PC-9 (cell line): ENCODE measurements at regions of chr17 and their contacts with region 1.

Region 1: GRCh38 chr17:81860756-81861518 is 602 bp upstream of the P4HB start:
- DNase-seq: peak; percentile 99
- H3K4me3 ChIP-seq: peak overlapping the region; percentile 86
- H3K27ac ChIP-seq: peak overlapping the region; percentile 80
- H3K4me1 ChIP-seq: no peaks in the 10 kb centered on the region
- H3K27me3 ChIP-seq: no peaks in the 10 kb centered on the region
- CTCF ChIP-seq: no peak

Region 2: GRCh38 chr17:81222906-81223761 is 637.8 kb before region 1 on chr17 and contains the start of gene CEP131:
- CTCF ChIA-PET with region 1: interaction called, 15 read pairs
- POLR2A ChIA-PET with region 1: no interaction called
- intact Hi-C with region 1: no loop called
- DNase-seq: peak; percentile 87 to 100
- H3K4me3 ChIP-seq: peak within 1 kb of the TSS; percentile 81
- H3K27ac ChIP-seq: no peak within 1 kb of the TSS
- H3K4me1 ChIP-seq: 0 out of 2 replicates have a peak, but pooled peaks cover 9% of the 10 kb centered on the region
- H3K27me3 ChIP-seq: no peaks in the 10 kb centered on the region
- CTCF ChIP-seq: no peak
- total RNA-seq, gene CEP131: 24.4 and 33.4 TPM in 2 replicates

Region 3: GRCh38 chr17:81722184-81723120 is 138.5 kb before region 1 on chr17:
- CTCF ChIA-PET with region 1: interaction called, 3 read pairs
- POLR2A ChIA-PET with region 1: interaction called, 11 read pairs
- intact Hi-C with region 1: no loop called
- DNase-seq: peak; percentile 79 to 99
- H3K4me3 ChIP-seq: no peak overlapping the region
- H3K27ac ChIP-seq: peak overlapping the region; percentile 68
- H3K4me1 ChIP-seq: peaks cover 27% of the 10 kb centered on the region
- H3K27me3 ChIP-seq: no peaks in the 10 kb centered on the region
- CTCF ChIP-seq: no peak

Region 4: DNA sequence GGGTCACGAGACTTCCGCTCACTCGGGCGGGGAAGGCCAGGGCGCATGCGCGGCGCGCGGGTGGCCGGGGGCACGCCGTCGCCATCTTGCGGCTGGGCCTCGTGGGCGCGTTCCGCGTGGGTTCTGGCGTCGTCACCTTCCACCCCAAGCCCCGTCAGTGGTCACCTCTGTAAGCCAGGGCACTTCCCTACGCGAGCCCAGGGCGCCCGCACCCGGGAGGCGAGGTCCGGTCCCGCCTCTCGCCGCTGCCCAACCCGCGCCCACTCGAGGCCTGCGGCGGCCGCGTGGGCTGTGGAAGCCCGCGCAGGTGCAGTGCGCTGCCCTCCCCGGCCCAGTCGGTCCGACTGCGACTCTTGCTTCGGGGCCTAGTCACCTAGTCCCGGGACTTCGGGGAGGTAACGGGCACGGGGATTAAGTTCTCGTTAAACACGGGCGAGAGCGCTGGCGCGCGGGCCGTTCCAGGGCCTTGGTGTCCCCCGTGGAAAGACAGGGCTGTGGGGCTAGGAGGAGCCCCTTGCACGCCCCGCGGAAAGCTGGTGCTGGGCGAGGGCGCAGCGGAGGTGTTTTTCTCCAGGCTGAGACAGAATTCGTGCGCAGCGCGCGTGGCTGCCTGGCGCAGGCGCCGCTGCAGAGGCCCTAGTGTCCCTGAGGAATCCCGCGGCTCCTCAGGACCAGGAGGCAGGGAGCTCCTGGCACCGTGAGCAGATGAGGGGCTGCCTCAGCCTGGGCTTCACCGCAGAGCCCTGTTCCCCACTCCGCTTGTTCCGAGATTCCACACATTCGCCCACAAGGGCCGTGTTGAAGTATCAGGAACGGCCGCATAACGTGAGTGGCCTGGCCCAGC is 10.7 kb after region 1 on chr17:
- CTCF ChIA-PET with region 1: no interaction called
- POLR2A ChIA-PET with region 1: interaction called, 12 read pairs
- intact Hi-C with region 1: no loop called
- DNase-seq: peak; percentile 47 to 91
- H3K4me3 ChIP-seq: peak overlapping the region; percentile 88
- H3K27ac ChIP-seq: peak overlapping the region; percentile 87
- H3K4me1 ChIP-seq: 0 out of 2 replicates have a peak, but pooled peaks cover 14% of the 10 kb centered on the region
- H3K27me3 ChIP-seq: no peaks in the 10 kb centered on the region
- CTCF ChIP-seq: no peak; the same call in 1 of the 2 replicates

Region 5: DNA sequence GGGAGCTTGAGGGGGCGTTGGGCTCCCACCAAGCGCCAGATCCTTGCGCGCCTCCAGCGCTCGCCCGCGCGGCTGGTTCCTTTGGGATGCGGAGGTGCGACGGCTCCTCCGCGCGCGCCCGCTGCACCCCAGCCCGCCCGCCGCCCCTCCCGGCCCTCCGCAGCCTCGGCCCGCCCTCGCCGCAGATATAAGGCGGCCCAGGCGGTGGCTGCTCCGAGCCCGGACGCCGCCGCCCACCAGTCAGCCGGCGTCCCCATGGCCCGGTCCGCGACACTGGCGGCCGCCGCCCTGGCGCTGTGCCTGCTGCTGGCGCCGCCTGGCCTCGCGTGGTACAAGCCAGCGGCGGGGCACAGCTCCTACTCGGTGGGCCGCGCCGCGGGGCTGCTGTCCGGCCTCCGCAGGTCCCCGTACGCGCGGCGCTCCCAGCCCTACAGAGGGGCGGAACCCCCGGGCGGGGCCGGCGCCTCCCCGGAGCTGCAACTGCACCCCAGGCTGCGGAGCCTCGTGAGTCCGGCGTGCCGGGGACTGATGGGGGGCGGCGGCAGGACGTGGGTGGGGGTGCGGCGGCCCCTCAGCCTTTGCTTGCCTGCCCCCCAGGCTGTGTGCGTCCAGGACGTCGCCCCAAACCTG is 41.2 kb after region 1 on chr17 and contains the start of gene NPB:
- CTCF ChIA-PET with region 1: interaction called, 12 read pairs
- POLR2A ChIA-PET with region 1: no interaction called
- intact Hi-C with region 1: no loop called
- DNase-seq: no peak
- H3K4me3 ChIP-seq: no peak within 1 kb of the TSS
- H3K27ac ChIP-seq: no peak within 1 kb of the TSS
- H3K4me1 ChIP-seq: peaks cover 27% of the 10 kb centered on the region
- H3K27me3 ChIP-seq: no peaks in the 10 kb centered on the region
- CTCF ChIP-seq: no peak
- total RNA-seq, gene NPB: 0.83 and 1.1 TPM in 2 replicates

Region 6: DNA sequence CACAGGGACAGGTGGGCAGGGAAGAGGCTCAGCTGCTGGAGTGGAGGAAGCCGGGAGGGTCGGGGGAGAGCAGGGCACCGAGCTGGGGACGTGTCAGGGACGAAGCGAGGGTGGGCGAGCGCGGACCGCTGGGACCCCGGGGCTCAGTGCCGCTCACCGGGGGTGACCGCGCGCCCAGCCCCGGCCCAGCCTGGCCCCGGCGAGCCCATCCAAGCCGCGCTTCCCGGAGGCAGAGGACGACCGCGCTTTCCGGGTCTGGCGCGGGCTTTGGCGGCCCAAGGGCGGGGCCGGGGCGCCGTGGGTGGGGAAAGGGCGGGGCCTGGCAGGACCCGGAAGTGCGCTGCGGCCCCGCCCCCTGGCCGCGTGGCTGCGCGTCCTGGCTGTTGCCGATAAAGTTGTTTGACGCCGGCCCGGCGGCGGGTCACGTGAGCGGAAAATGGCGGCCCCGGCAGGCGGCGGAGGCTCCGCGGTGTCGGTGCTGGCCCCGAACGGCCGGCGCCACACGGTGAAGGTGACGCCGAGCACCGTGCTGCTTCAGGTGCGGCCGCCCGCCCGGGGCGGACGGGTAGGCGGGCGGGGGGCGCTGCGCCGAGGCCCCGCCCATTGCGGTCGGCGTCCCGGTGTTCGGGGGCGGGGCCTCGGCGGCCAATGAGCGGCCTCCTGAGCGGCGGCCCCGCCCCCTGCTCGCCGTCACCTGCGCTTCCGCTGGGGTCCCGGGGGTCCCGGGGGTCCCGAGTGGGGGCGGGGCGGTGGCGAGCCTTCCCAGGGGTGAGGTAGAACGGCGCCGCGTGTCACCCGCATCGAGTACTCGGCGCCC is 116.5 kb after region 1 on chr17 and contains the start of gene ASPSCR1:
- CTCF ChIA-PET with region 1: no interaction called
- POLR2A ChIA-PET with region 1: no interaction called
- intact Hi-C with region 1: no loop called
- DNase-seq: peak; percentile 49 to 92
- H3K4me3 ChIP-seq: peak within 1 kb of the TSS; percentile 62
- H3K27ac ChIP-seq: peak within 1 kb of the TSS; percentile 57; the same call in 1 of the 2 replicates
- H3K4me1 ChIP-seq: peaks cover 29% of the 10 kb centered on the region
- H3K27me3 ChIP-seq: no peaks in the 10 kb centered on the region
- CTCF ChIP-seq: no peak
- total RNA-seq, gene ASPSCR1: 54.9 and 80.0 TPM in 2 replicates

Region 7: GRCh38 chr17:81991684-81992305 is 130.9 kb after region 1 on chr17:
- CTCF ChIA-PET with region 1: no interaction called
- POLR2A ChIA-PET with region 1: no interaction called
- intact Hi-C with region 1: no loop called
- DNase-seq: peak in 1 of 2 experiments; percentile 95
- H3K4me3 ChIP-seq: no peak overlapping the region
- H3K27ac ChIP-seq: no peak overlapping the region
- H3K4me1 ChIP-seq: no peaks in the 10 kb centered on the region
- H3K27me3 ChIP-seq: no peaks in the 10 kb centered on the region
- CTCF ChIP-seq: no peak